ENCODE measurements at regions of chr2 and their contacts with region 1.

Region 1: GRCh38 chr2:218406209-218406948 is 6.7 kb downstream of the CTDSP1 start:
- DNase-seq: no peak
- H3K4me3 ChIP-seq: peak overlapping the region; percentile 53 to 65
- H3K27ac ChIP-seq: peak overlapping the region; percentile 97
- H3K4me1 ChIP-seq: peaks cover 62% of the 10 kb centered on the region
- H3K27me3 ChIP-seq: no peaks in the 10 kb centered on the region
- CTCF ChIP-seq: peak; percentile 25 to 70 (median 68)
- POLR2A ChIP-seq: no peak

Region 2: GRCh38 chr2:218471982-218472381 is 65.6 kb after region 1 on chr2:
- intact Hi-C with region 1: loop called (anchors 2 kb)
- DNase-seq: no peak
- H3K4me3 ChIP-seq: no peak overlapping the region
- H3K27ac ChIP-seq: no peak overlapping the region
- H3K4me1 ChIP-seq: no peaks in the 10 kb centered on the region
- H3K27me3 ChIP-seq: no peaks in the 10 kb centered on the region
- CTCF ChIP-seq: no peak
- POLR2A ChIP-seq: no peak

Region 3: DNA sequence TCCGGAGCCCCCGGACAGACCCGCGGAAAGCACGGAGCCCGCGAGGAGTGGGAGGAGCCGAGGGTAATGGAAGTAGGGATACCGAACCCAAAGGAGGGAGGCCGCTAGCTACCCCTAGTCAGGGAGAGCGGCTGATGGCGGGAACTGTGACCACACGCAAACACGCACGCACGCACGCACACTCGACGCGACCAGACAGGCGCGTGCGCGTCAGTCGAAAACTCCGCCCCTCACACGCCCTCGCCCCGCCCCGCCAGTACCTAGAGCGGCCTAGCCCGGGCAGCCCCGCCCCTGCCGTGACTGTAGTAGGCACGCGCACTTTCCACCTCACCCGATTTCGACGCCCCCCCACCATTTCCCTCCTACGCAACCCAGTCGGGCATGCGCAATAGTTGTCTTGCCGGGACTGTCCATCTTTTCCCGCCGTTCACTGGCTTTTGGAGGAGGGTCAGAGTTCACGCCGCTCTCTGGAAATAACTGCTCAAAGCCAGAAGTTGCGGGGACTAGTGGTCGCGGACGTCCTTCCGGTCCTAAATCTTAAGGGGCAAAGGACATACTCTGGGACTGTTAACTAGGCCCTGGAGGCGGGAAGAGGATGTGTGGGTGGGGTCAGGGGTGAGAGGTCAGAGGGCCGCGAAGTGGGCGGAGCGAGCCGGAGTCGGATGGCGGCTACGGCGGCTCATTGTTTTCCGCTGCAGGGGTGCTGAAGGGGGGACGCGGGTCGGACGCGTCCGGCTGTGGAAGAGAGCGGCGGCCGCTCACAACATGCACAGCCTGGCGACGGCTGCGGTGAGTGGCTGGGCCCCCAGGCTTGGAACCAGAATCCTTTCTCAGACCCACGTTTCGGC is 162.0 kb after region 1 on chr2 and contains the starts of genes CNOT9 and USP37:
- intact Hi-C with region 1: loop called (anchors 10 kb)
- DNase-seq: peak; percentile 98 to 99
- H3K4me3 ChIP-seq: peak within 1 kb of the TSS; percentile 73 to 94
- H3K27ac ChIP-seq: peak within 1 kb of the TSS; percentile 94
- H3K4me1 ChIP-seq: peaks cover 40% of the 10 kb centered on the region
- H3K27me3 ChIP-seq: no peaks in the 10 kb centered on the region
- CTCF ChIP-seq: peak in 1 of 3 experiments; percentile 20
- POLR2A ChIP-seq: peak in 1 of 2 donors; percentile 77
- total RNA-seq, gene CNOT9: 46.4 TPM
- total RNA-seq, gene USP37: 23.3 TPM

Region 4: GRCh38 chr2:218648088-218648786 is 241.9 kb after region 1 on chr2:
- intact Hi-C with region 1: loop called (anchors 10 kb)
- DNase-seq: no peak
- H3K4me3 ChIP-seq: no peak overlapping the region
- H3K27ac ChIP-seq: no peak overlapping the region
- H3K4me1 ChIP-seq: no peaks in the 10 kb centered on the region
- H3K27me3 ChIP-seq: no peaks in the 10 kb centered on the region
- CTCF ChIP-seq: peak; percentile 23 to 60 (median 47)
- POLR2A ChIP-seq: no peak

Region 5: DNA sequence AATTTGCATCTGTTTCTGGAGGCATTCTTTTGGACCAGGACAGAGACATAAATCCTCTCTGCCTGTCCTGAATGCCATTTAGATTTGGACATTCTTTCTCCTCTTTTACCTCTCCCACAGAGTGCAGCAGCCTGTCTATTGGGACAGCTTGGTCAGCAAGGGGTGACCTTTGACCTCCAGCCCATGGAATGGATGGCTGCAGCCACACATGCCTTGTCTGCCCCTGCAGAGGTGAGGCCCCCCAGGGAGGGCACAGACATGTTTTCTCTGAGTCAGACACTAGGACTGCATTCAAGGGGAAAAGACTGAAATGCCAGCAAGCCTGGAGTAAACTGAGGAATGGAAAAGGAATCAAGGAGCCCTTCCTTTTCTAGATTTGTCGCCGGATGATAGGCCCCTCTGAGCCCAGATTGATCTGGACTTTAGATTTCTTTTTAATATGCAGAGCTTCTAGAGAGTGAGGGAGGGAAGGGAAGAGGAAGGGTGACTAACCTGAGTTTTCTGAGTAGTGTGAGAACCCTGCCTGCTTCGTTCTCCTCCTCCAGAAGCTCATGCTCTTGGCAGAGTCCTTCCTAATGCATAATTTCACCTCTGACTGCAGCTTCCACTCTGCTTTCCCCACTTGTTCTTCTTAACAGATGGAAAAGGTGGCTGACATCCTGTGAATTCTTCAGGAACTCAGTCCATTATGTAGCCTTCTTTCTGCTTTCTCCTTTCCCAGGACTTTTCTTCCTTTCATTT is 288.2 kb after region 1 on chr2:
- intact Hi-C with region 1: no loop called
- DNase-seq: no peak
- H3K4me3 ChIP-seq: no peak overlapping the region
- H3K27ac ChIP-seq: no peak overlapping the region
- H3K4me1 ChIP-seq: no peaks in the 10 kb centered on the region
- H3K27me3 ChIP-seq: no peaks in the 10 kb centered on the region
- CTCF ChIP-seq: no peak
- POLR2A ChIP-seq: no peak